ENCODE measurements at regions of chr10 and their contacts with region 1.

Region 1: DNA sequence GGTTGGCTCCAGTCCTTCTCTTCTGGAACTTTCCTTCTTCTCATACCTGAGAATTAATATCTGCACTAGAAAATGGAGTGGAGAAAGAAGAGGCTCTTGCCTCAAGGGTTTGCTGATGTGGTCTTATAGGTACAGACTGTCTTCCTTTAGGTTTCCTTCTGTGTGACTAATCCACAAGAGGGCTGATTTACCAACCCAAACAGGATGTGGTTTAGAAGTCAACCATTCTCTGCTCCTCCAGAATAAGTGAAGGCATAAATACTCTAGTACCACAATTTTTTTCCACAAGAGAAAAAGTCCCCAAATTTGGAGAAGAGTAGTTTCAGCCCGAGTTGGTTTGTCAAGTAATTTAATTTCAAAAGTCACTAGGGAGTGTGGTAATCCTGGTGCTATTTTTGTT is 85.8 kb downstream of the NRP1 start:
- DNase-seq: peak; percentile 47
- H3K4me3 Mint-ChIP-seq: peak overlapping the region; percentile 37
- H3K27ac Mint-ChIP-seq: peak overlapping the region; percentile 54
- H3K4me1 Mint-ChIP-seq: peaks cover 75% of the 10 kb centered on the region
- H3K27me3 Mint-ChIP-seq: peaks cover 33% of the 10 kb centered on the region

Region 2: DNA sequence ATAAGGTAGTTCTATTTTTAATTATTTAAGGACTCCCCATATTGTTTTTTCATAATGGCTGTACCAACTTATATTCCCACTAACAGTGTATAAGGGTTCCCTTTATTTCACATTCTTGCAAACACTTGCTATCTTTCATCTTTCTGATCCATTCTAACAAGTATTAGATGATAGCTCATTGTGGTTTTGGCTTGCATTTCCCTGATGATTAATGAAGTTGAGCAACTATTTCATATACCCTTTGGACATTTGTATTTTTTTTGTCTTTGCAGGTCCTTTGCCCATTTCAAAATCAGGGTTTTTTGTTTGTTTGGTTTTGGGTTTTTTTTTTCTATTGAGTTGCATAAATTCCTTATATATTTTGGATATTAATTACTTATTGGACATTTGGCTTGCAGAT is 1008.9 kb before region 1 on chr10:
- intact Hi-C with region 1: loop called (anchors 10 kb)
- DNase-seq: no peak
- H3K4me3 Mint-ChIP-seq: no peak overlapping the region
- H3K27ac Mint-ChIP-seq: no peak overlapping the region
- H3K4me1 Mint-ChIP-seq: peaks cover 16% of the 10 kb centered on the region
- H3K27me3 Mint-ChIP-seq: no peaks in the 10 kb centered on the region

Region 3: GRCh38 chr10:33120700-33121099 is 127.9 kb before region 1 on chr10:
- intact Hi-C with region 1: loop called (anchors 1 kb)
- DNase-seq: no peak
- H3K4me3 Mint-ChIP-seq: peak overlapping the region; percentile 2
- H3K27ac Mint-ChIP-seq: peak overlapping the region; percentile 57
- H3K4me1 Mint-ChIP-seq: peaks cover 45% of the 10 kb centered on the region
- H3K27me3 Mint-ChIP-seq: no peaks in the 10 kb centered on the region

Region 4: DNA sequence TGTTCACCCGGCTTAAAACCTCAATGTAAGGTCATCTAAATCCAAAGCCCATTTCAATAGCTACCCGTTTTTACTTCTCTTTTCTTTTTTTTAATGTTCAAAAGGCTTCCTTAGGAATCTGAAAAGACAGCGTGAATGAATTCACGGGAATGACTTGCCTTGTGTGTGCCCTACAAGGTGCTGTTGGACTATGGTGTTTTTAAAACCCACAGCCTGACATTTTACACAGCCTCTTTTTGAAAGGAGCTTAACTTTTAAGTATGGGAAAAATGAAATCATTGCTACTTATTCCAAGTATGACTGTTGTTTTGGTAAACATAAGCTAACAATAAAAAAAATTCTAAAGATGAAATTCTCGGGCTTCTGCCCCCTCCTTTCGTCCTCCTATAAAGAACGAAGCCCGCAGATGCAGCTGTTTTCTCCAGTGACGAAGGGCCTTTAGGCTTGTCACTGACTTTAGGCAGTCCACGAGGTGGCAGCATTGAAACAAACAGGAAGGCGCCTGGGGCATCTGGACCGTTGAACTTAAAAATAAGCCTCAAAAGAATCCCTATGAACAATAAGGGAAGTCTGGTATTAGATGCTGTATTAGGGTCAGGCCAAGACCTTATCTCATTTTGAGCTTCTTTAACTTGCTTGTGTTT is 55.5 kb before region 1 on chr10:
- intact Hi-C with region 1: loop called (anchors 5 kb)
- DNase-seq: peak; percentile 52
- H3K4me3 Mint-ChIP-seq: no peak overlapping the region
- H3K27ac Mint-ChIP-seq: no peak overlapping the region
- H3K4me1 Mint-ChIP-seq: no peaks in the 10 kb centered on the region
- H3K27me3 Mint-ChIP-seq: peaks cover 17% of the 10 kb centered on the region

Region 5: GRCh38 chr10:33265621-33266020 is 17.0 kb after region 1 on chr10:
- intact Hi-C with region 1: loop called (anchors 1 kb)
- DNase-seq: no peak
- H3K4me3 Mint-ChIP-seq: no peak overlapping the region
- H3K27ac Mint-ChIP-seq: no peak overlapping the region
- H3K4me1 Mint-ChIP-seq: peaks cover 21% of the 10 kb centered on the region
- H3K27me3 Mint-ChIP-seq: peaks cover 19% of the 10 kb centered on the region

Region 6: DNA sequence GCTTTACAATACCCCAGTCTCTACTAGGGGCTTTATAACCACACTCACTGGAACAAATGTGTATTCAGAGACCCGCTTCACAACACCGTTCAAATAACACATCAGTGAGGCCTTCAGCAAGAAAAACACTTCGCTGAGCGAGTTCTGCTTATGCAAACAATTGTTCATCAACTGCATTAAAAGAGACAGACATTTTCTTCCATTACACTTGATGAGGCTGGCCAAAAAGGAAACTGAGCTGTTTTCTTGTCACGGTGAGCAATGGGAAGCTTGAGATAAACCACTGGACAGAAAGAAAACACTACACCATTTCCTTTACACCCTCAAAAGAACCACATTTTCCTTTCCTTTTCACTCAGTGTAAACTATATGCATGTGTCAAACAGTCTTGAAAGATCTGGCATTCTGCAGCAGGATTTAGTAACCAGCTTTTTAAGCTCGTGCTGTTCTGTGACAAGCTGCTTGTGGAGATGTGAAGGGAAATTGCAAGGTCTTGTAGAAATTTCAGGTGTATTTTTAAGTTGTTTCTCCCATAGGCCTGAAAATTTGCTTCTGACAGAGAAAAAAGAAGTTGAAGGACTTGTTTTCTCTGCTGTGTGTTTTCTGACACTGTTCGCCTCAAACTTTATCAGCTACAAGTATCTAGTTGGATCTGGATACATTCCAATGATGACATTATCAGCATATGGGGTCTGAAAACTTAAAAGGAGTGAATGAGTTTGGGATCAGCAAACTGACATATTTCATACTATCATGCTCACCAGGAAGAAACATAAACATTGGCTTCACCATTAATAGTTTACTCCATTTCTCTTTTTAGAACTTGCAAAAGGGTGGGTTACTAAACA is 873.4 kb after region 1 on chr10:
- intact Hi-C with region 1: loop called (anchors 2 kb)
- DNase-seq: peak; percentile 13
- H3K4me3 Mint-ChIP-seq: peak overlapping the region; percentile 17
- H3K27ac Mint-ChIP-seq: peak overlapping the region; percentile 86
- H3K4me1 Mint-ChIP-seq: peaks cover 27% of the 10 kb centered on the region
- H3K27me3 Mint-ChIP-seq: no peaks in the 10 kb centered on the region